CD4-positive, alpha-beta T cell (primary cell): ENCODE measurements at regions of chr11 and their contacts with region 1.

Region 1: DNA sequence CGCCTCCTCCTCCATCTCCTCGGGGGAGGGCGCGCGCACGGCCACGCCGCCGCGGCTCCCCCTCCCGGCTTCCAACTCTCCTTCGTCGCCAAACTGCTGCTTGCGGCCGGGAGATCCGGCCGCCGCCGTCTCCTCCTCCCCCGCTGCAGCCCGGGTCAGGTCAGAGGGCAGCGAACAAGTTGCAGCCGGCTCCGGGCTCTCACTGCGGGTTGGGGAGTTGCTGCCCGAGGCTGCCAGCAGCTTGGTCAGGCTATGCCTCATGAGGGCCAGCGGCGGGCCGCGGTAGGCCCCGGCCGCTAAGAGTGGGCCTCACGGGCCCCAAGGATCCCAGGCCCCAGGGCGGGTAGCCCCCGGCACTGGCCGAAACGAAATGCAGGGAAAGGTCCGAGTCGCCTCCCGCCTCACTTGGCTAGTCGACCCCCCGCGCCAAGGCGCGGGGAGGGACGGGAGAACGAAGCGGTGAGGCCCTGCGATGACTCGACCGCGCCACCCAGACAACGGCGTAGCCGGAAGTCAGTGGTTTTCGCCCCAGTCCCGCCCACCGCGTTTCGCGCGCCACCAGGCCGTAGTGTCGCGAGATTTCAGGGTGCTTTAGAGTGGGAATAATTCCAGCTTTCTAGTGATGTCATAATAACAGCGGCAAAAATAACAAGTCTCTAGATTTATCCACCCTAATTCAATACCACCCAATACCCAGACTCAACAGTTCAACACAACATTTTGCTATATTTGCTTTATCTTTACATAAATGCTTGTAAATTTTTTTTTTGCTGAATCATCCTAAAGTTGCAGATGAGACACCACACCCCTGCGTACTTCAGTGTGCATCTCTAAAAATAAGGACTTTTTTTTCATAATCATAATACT is at the start of gene CREBZF:
- DNase-seq: peak; percentile 86 to 95 (median 90)
- ATAC-seq: peak; percentile 62
- H3K4me3 ChIP-seq: peak within 1 kb of the TSS; percentile 94
- H3K4me3 Mint-ChIP-seq: peak within 1 kb of the TSS; percentile 100
- H3K27ac ChIP-seq: peak within 1 kb of the TSS; percentile 97 to 99
- H3K27ac Mint-ChIP-seq: peak within 1 kb of the TSS; percentile 100
- H3K4me1 ChIP-seq: peaks cover 14% of the 10 kb centered on the region
- H3K4me1 Mint-ChIP-seq: peaks cover 58% of the 10 kb centered on the region
- H3K27me3 ChIP-seq: no peaks in the 10 kb centered on the region
- H3K27me3 Mint-ChIP-seq: no peaks in the 10 kb centered on the region
- CTCF ChIP-seq: no peak
- total RNA-seq, gene CREBZF: 54.8 to 55.9 TPM

Region 2: GRCh38 chr11:85627998-85628770 is 36.7 kb before region 1 on chr11 and contains the start of gene TMEM126B:
- CTCF ChIA-PET with region 1: interaction called, 3 read pairs
- POLR2A ChIA-PET with region 1: interaction called, 44 read pairs
- intact Hi-C with region 1: loop called (anchors 1 to 2 kb)
- DNase-seq: peak; percentile 89 to 97 (median 94)
- ATAC-seq: peak; percentile 96
- H3K4me3 ChIP-seq: peak within 1 kb of the TSS; percentile 71
- H3K4me3 Mint-ChIP-seq: peak within 1 kb of the TSS; percentile 96
- H3K27ac ChIP-seq: peak within 1 kb of the TSS; percentile 69 to 83
- H3K27ac Mint-ChIP-seq: peak within 1 kb of the TSS; percentile 92
- H3K4me1 ChIP-seq: peaks cover 13% of the 10 kb centered on the region
- H3K4me1 Mint-ChIP-seq: peaks cover 59% of the 10 kb centered on the region
- H3K27me3 ChIP-seq: no peaks in the 10 kb centered on the region
- H3K27me3 Mint-ChIP-seq: no peaks in the 10 kb centered on the region
- CTCF ChIP-seq: no peak
- total RNA-seq, gene TMEM126B: 16.3 to 16.8 TPM

Region 3: DNA sequence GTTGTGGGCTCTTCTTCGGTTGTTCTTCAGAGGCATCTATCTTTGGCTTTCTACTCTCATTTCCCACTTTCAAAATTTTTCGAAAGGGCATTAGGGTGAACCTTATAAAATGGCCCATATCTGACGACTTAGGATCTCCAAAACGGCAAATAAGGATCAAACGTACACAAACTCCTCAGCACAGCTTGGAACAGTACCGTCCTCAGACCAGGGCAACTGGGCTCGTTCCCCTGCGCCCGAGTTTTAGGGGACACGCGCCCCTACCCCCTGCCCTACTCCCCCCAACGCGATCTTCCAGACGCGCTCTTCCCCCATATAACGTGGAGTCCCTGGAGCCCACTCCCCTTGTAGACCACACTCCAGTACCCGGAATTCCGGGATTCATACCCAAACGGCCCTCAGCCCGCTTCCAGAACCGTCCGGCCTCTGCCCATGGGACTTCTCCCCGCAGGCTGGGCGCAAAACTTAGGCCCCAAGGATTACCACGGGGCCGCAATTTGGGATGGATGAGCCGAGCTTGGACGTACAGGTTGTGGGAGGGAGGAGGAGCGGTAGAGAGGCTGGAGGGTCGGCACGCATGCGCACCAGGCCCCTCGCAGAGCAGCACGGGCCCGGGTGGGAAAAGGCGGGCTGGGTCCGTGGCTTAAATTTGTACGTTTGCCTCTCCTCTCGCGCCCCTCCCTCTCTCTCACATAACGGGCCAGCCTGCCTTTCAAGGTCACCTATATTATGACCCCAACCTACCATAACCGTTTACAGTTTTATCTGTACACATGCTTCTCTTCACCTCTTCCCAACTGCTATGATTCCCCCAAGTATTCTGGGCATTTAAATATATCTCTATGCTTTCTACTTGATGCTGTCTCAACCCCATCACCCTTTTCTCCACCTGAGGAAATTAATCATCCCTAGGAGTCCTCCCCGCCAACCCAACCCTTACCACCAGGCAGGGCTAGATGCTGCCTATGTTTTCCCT is 17.8 kb after region 1 on chr11:
- CTCF ChIA-PET with region 1: interaction called, 5 read pairs
- POLR2A ChIA-PET with region 1: interaction called, 12 read pairs
- intact Hi-C with region 1: no loop called
- DNase-seq: peak; percentile 22 to 75 (median 46)
- ATAC-seq: peak; percentile 76
- H3K4me3 ChIP-seq: peak overlapping the region; percentile 69
- H3K4me3 Mint-ChIP-seq: peak overlapping the region; percentile 86
- H3K27ac ChIP-seq: no peak overlapping the region
- H3K27ac Mint-ChIP-seq: no peak overlapping the region
- H3K4me1 ChIP-seq: peaks cover 12% of the 10 kb centered on the region
- H3K4me1 Mint-ChIP-seq: peaks cover 11% of the 10 kb centered on the region
- H3K27me3 ChIP-seq: peaks cover 0 to 5% of the 10 kb centered on the region in 2 experiments
- H3K27me3 Mint-ChIP-seq: no peaks in the 10 kb centered on the region
- CTCF ChIP-seq: no peak

Region 4: GRCh38 chr11:85810871-85811611 is 146.2 kb after region 1 on chr11 and contains the start of gene SYTL2:
- CTCF ChIA-PET with region 1: no interaction called
- POLR2A ChIA-PET with region 1: interaction called, 27 read pairs
- intact Hi-C with region 1: no loop called
- DNase-seq: peak; percentile 46 to 91 (median 69)
- ATAC-seq: peak; percentile 80
- H3K4me3 ChIP-seq: peak within 1 kb of the TSS; percentile 68
- H3K4me3 Mint-ChIP-seq: peak within 1 kb of the TSS; percentile 96
- H3K27ac ChIP-seq: peak within 1 kb of the TSS in 1 of 2 donors; percentile 43
- H3K27ac Mint-ChIP-seq: peak within 1 kb of the TSS; percentile 89
- H3K4me1 ChIP-seq: peaks cover 37% of the 10 kb centered on the region
- H3K4me1 Mint-ChIP-seq: peaks cover 48% of the 10 kb centered on the region
- H3K27me3 ChIP-seq: no peaks in the 10 kb centered on the region
- H3K27me3 Mint-ChIP-seq: no peaks in the 10 kb centered on the region
- CTCF ChIP-seq: no peak
- total RNA-seq, gene SYTL2: 35.4 to 36.7 TPM

Region 5: DNA sequence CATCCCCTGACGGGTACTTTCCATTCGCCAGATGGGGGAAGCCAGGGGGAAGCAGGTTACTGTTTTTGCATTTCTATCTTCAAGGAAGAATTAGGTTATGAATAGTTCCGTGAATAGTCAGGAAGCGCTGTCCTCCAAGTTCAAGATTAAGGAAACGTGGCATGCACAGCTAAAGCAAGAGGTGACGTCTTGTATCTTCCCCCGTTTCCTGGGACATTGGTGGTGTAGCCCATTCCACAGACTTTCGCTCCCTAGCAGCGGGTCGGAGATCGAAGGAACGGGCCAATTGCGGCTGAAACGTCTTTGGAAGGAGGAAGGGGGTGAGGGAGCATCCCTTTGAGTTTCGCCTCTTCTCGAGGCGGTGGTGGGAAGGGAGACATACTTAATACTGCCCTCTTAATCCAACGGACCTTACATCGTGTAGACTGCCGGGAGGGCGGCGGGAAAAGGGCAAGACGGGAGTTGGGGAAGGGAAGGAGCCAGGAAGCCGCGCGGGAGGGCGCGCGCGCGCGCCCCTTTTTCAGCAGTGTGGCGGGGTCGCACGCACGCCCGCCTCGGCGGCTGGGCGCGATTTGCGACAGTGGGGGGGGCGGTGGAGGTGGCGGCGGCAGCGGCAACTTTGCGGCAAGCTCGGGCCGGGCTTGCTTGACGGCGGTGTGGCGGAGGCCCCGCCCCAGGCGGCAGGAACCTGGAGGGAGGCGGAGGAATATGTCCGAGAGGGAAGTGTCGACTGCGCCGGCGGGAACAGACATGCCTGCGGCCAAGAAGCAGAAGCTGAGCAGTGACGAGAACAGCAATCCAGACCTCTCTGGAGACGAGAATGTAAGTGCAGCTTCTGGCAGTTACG is 579.9 kb after region 1 on chr11 and contains the start of gene EED:
- CTCF ChIA-PET with region 1: no interaction called
- POLR2A ChIA-PET with region 1: interaction called, 10 read pairs
- intact Hi-C with region 1: loop called (anchors 2 to 10 kb)
- DNase-seq: peak; percentile 86 to 97 (median 93)
- ATAC-seq: peak; percentile 83
- H3K4me3 ChIP-seq: peak within 1 kb of the TSS; percentile 82
- H3K4me3 Mint-ChIP-seq: no peak within 1 kb of the TSS
- H3K27ac ChIP-seq: peak within 1 kb of the TSS; percentile 99
- H3K27ac Mint-ChIP-seq: no peak within 1 kb of the TSS
- H3K4me1 ChIP-seq: peaks cover 4% of the 10 kb centered on the region
- H3K4me1 Mint-ChIP-seq: no peaks in the 10 kb centered on the region
- H3K27me3 ChIP-seq: no peaks in the 10 kb centered on the region
- H3K27me3 Mint-ChIP-seq: no peaks in the 10 kb centered on the region
- CTCF ChIP-seq: no peak
- total RNA-seq, gene EED: 32.1 to 35.4 TPM